PC-9 (cell line): ENCODE measurements at regions of chr10 and their contacts with region 1.

Region 1: DNA sequence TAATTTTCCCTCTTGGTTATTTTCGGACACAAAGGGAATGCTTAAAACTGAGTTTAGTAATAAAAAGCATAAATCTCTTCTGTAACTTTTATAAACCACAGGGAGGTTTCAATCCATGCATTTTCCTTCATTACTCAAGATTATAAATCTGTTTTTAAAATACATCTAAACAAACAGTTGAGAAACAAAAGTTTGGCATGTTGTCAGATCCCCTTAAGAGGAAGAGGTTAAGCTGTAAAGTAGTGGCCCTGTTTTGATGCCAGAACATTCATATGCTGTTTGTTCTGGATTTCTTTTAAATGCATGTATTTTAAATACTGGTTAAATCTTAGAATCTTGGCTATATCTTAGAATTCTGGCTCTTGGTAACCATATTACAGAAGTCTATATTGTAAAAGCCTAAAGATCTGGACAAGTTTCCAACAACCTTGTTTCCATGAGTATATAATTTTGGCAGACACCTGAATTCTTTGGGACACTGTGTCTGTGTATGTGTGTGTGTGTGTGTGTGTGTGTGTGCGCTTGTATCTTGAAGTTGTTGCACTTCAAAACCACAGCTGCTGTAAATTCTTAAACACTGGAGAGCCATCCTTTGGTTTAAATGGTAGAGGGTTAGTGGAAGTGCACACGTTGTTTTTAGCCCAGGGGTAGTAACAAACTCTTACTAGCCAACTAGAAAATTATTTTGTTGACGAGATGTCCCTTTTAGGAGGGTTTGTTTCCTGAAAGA is 6.8 kb upstream of the SEMA4G start:
- DNase-seq: no peak
- H3K4me3 ChIP-seq: no peak overlapping the region
- H3K27ac ChIP-seq: no peak overlapping the region
- H3K4me1 ChIP-seq: no peaks in the 10 kb centered on the region
- H3K27me3 ChIP-seq: no peaks in the 10 kb centered on the region
- CTCF ChIP-seq: no peak

Region 2: GRCh38 chr10:100607439-100607838 is 355.1 kb before region 1 on chr10:
- CTCF ChIA-PET with region 1: no interaction called
- POLR2A ChIA-PET with region 1: no interaction called
- intact Hi-C with region 1: no loop called
- DNase-seq: no peak
- H3K4me3 ChIP-seq: no peak overlapping the region
- H3K27ac ChIP-seq: no peak overlapping the region
- H3K4me1 ChIP-seq: no peaks in the 10 kb centered on the region
- H3K27me3 ChIP-seq: peaks cover 46% of the 10 kb centered on the region
- CTCF ChIP-seq: no peak

Region 3: DNA sequence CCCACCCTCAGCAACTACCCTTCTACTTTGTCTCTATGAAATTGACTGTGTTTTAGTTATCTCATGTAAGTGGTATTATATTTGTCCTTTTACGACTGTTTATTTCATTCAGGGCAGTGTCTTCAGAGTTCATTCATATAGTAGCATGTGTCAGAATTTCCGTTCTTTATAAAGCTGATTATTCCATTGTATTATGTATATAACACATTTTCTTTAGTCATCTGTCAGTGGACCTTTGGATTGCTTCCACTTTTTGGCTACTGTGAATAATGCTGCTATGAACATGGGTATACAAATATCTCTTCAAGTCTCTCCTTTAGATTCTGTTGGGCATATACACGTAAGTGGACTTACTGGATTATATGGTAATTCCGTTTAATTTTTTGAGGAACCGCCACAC is 35.2 kb before region 1 on chr10:
- CTCF ChIA-PET with region 1: no interaction called
- POLR2A ChIA-PET with region 1: no interaction called
- intact Hi-C with region 1: loop called (anchors 5 kb)
- DNase-seq: no peak
- H3K4me3 ChIP-seq: no peak overlapping the region
- H3K27ac ChIP-seq: no peak overlapping the region
- H3K4me1 ChIP-seq: peaks cover 18% of the 10 kb centered on the region
- H3K27me3 ChIP-seq: no peaks in the 10 kb centered on the region
- CTCF ChIP-seq: no peak

Region 4: DNA sequence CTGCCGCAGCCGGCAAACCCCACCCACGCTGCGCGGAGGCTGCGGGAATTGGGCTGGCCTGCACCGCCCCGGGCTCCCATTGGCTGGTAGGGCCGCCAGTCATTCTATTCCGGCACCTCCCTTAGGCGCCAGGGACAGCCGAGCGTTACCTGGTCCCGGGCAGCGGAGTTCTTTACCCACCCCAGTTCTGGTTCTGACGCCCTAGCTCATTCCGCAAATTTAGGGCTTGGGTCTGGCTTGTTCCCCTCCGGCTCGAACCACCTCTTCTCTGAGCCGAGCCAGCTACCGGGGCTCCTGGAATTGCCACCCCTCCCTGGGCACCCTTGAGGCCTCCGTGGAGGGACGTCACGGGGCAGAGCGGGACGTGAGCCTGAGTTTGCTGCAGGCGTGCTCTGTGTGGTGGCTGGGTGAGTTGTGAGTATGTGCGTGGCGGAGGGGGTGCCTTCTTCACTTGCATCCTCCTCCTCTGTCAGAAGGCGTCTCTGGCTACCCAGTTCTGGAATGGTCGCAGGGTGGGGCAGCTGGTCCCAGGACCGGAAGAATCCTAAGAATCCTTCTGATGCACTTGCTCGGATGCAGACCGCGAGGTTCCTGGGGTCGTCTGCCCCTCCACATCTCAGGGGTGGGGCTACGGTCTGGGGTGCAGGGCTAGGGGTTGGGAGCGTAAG is 68.7 kb after region 1 on chr10 and contains the starts of genes PDZD7 and SFXN3:
- CTCF ChIA-PET with region 1: interaction called, 10 read pairs
- POLR2A ChIA-PET with region 1: no interaction called
- intact Hi-C with region 1: no loop called
- DNase-seq: peak; percentile 74 to 91
- H3K4me3 ChIP-seq: peak within 1 kb of the TSS; percentile 82
- H3K27ac ChIP-seq: peak within 1 kb of the TSS; percentile 52
- H3K4me1 ChIP-seq: peaks cover 15% of the 10 kb centered on the region
- H3K27me3 ChIP-seq: no peaks in the 10 kb centered on the region
- CTCF ChIP-seq: no peak
- total RNA-seq, gene PDZD7: 2.3 and 2.8 TPM in 2 replicates
- total RNA-seq, gene SFXN3: 30.6 and 35.2 TPM in 2 replicates

Region 5: GRCh38 chr10:101441541-101442455 is 479.3 kb after region 1 on chr10:
- CTCF ChIA-PET with region 1: no interaction called
- POLR2A ChIA-PET with region 1: no interaction called
- intact Hi-C with region 1: no loop called
- DNase-seq: peak; percentile 7 to 36
- H3K4me3 ChIP-seq: no peak overlapping the region
- H3K27ac ChIP-seq: no peak overlapping the region
- H3K4me1 ChIP-seq: no peaks in the 10 kb centered on the region
- H3K27me3 ChIP-seq: no peaks in the 10 kb centered on the region
- CTCF ChIP-seq: peak; percentile 68